ENCODE measurements at regions of chr17 and their contacts with region 1.

Region 1: DNA sequence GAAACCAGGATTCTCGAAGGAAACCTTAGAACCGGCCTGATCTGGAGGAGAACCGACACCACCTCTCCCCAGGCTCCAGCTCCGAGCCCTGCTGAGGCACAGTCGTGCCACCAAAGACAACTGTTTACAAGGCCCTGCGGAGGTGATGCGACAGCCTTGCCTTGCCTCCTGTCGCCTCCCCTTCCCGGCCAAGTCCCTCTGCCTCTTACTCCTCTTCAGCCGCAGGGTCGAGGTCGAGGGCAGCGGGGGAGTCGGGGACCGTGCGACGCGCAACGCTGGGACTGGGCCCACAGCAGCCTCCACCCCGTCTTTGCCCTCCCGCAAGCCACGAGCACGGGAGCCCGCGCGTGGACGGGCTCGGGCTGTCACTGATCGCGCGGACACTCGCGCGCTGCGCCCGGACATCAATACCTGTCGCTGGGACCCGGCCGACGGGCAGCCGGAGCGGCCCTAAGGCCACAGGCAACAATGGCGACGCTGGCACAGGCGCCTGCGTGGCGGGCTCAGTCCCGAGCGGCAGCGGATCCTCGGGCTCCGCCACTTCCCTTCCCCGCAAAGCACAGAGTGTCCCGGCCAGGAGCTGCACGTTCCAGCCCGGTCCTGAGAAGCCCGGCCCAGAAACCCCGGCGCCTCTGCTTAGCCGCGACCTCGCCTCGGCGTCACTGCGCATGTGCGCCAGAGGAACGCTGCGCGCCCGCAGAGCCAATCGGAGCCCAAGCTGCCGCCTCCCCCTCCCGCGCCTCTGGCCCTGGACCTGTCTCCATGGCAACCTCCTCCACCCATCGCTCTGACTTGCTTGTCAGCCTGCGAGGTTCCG is at the start of gene ZNF287:
- DNase-seq: peak; percentile 79 to 94
- H3K4me3 ChIP-seq: peak within 1 kb of the TSS; percentile 65
- H3K4me1 ChIP-seq: peaks cover 6% of the 10 kb centered on the region
- H3K27me3 ChIP-seq: 0 out of 2 replicates have a peak, but pooled peaks cover 2% of the 10 kb centered on the region

Region 2: GRCh38 chr17:16463358-16464302 is 105.1 kb before region 1 on chr17:
- in situ Hi-C with region 1: no loop called
- DNase-seq: no peak
- H3K4me3 ChIP-seq: no peak overlapping the region
- H3K4me1 ChIP-seq: no peaks in the 10 kb centered on the region
- H3K27me3 ChIP-seq: no peaks in the 10 kb centered on the region

Region 3: DNA sequence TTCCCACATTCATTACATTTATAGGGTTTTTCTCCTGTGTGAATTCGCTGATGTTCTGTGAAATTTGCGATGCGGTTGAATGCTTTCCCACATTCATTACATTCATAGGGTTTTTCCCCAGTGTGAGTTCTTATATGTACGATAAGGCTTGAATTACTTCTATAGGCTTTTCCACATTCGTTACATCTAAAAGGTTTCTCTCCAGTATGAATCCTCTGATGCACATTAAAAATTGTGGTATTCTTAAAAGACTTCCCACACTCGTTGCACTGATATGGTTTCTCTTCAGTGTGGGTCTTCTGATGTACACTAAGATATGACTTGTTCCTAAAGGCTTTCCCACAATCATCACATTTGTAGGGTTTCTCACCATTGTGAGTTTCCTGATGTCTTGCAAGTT is 54.5 kb after region 1 on chr17:
- in situ Hi-C with region 1: loop called (anchors 10 kb)
- DNase-seq: no peak
- H3K4me3 ChIP-seq: no peak overlapping the region
- H3K4me1 ChIP-seq: no peaks in the 10 kb centered on the region
- H3K27me3 ChIP-seq: no peaks in the 10 kb centered on the region

Region 4: GRCh38 chr17:16873174-16874035 is 304.7 kb after region 1 on chr17:
- in situ Hi-C with region 1: loop called (anchors 25 kb)
- DNase-seq: peak; percentile 16 to 76
- H3K4me3 ChIP-seq: no peak overlapping the region
- H3K4me1 ChIP-seq: no peaks in the 10 kb centered on the region
- H3K27me3 ChIP-seq: no peaks in the 10 kb centered on the region

Region 5: GRCh38 chr17:17055286-17056155 is 486.8 kb after region 1 on chr17:
- in situ Hi-C with region 1: no loop called
- DNase-seq: no peak
- H3K4me3 ChIP-seq: no peak overlapping the region
- H3K4me1 ChIP-seq: no peaks in the 10 kb centered on the region
- H3K27me3 ChIP-seq: no peaks in the 10 kb centered on the region